Prostate gland (tissue), 2 donors: ENCODE measurements at regions of chr3 and their contacts with region 1.

Region 1: GRCh38 chr3:15377961-15378791 is 45.8 kb upstream of the SH3BP5 start:
- DNase-seq: peak; percentile 84
- H3K4me3 ChIP-seq: no peak overlapping the region
- H3K27ac ChIP-seq: peak overlapping the region in 1 of 2 donors; percentile 32
- H3K4me1 ChIP-seq: no peaks in the 10 kb centered on the region
- H3K27me3 ChIP-seq: no peaks in the 10 kb centered on the region
- CTCF ChIP-seq: peak; percentile 82 to 96 (median 92)
- POLR2A ChIP-seq: no peak

Region 2: GRCh38 chr3:15256861-15257341 is 121.3 kb before region 1 on chr3:
- intact Hi-C with region 1: no loop called
- DNase-seq: no peak
- H3K4me3 ChIP-seq: no peak overlapping the region
- H3K27ac ChIP-seq: no peak overlapping the region
- H3K4me1 ChIP-seq: no peaks in the 10 kb centered on the region
- H3K27me3 ChIP-seq: no peaks in the 10 kb centered on the region
- CTCF ChIP-seq: no peak
- POLR2A ChIP-seq: no peak

Region 3: DNA sequence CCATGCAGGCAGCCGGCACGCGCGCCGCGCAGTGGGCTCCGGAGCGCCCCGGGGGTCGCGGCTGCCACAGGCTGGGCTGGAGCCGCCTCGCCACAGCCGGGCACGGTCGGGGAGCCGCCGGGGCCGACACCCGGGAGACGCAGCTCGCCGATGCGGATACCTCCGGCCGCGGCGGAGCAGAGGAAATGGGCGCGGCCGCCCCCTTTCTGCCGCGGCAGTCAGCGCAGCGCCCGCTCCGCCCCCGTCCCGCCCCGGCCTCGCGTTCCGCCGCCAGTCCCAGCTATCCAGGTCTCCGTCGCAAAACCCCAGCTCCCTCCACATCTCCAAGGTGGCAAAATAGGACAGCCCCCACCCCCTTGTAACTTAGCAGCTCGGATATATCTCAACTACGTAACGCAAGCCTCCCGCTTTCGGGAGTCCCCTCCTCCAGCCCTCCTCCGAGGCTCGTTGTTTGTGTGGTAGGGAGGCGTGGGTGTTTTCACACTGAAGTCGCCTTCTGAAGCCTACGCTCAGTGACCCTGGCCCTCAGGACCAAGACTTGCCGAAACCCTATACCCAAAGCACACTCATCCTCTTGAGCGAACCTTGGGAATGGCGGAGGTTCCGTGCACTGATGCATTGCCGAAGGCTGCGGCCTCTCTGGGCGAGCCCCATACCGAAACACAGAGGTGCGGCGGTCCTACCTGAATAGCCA is 45.6 kb before region 1 on chr3 and contains the start of gene SH3BP5:
- intact Hi-C with region 1: loop called (anchors 5 kb)
- DNase-seq: peak; percentile 57
- H3K4me3 ChIP-seq: peak within 1 kb of the TSS; percentile 69 to 78
- H3K27ac ChIP-seq: peak within 1 kb of the TSS; percentile 74 to 82
- H3K4me1 ChIP-seq: no peaks in the 10 kb centered on the region
- H3K27me3 ChIP-seq: no peaks in the 10 kb centered on the region
- CTCF ChIP-seq: peak; percentile 57 to 84 (median 74)
- POLR2A ChIP-seq: peak; percentile 50
- total RNA-seq, gene SH3BP5: 13.3 to 71.6 TPM